Ascending aorta (tissue), 2 donors: ENCODE measurements at regions of chr20 and their contacts with region 1.

Region 1: DNA sequence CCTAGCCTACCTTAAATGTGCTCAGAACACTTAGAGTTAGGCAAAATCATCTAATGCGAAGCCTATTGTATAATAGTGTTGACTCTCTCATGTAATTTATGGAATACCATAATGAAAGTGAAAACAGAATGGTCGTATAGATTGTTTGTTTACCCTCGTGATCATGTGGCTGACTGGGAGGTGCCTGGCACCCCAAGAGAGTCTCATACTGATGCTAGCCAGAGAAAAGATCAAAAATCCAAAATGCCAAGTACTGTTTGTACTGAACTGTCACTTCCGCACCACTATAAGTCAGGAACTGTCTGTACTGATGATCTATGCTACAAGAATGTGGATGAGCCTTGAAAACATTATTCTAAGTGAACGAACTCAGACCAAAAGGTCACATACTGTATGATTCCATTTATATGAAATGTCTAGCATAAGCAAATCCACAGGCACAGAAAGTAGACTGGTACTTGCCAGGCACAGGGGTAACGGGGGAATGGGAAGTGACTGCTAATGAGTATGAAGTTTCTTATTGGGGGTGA is 22.4 kb downstream of the ZMYND8 start:
- DNase-seq: peak in 1 of 2 donors; percentile 75
- H3K4me3 ChIP-seq: peak overlapping the region in 1 of 2 donors; percentile 9
- H3K27ac ChIP-seq: peak overlapping the region; percentile 82 to 84
- H3K4me1 ChIP-seq: peaks cover 7 to 55% of the 10 kb centered on the region in 2 donors
- H3K27me3 ChIP-seq: no peaks in the 10 kb centered on the region
- CTCF ChIP-seq: no peak

Region 2: DNA sequence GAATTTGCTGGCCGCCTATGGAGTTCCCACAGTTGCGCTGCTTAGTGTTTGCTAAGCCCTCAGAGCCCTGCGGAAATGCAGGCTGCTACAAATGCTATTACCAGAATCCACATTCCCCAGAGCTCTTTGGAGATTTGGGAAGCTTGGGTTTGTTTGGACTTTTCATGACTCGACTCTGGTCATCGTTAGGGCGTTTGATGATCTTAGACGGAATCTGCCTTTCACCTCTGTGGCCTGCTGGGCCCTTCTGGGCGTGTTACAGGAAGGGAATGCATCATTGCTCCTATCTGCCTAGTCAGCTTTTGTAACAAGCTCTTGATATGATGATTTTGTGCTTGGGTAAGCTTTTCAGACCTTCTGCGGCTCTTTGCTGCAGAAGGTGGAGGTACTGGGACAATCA is 388.6 kb before region 1 on chr20:
- intact Hi-C with region 1: no loop called
- DNase-seq: no peak
- H3K4me3 ChIP-seq: no peak overlapping the region
- H3K27ac ChIP-seq: peak overlapping the region in 1 of 2 donors; percentile 11
- H3K4me1 ChIP-seq: peaks cover 0 to 6% of the 10 kb centered on the region in 2 donors
- H3K27me3 ChIP-seq: no peaks in the 10 kb centered on the region
- CTCF ChIP-seq: no peak

Region 3: GRCh38 chr20:47133574-47134456 is 200.3 kb before region 1 on chr20:
- intact Hi-C with region 1: no loop called
- DNase-seq: no peak
- H3K4me3 ChIP-seq: no peak overlapping the region
- H3K27ac ChIP-seq: no peak overlapping the region
- H3K4me1 ChIP-seq: no peaks in the 10 kb centered on the region
- H3K27me3 ChIP-seq: no peaks in the 10 kb centered on the region
- CTCF ChIP-seq: no peak

Region 4: GRCh38 chr20:47317127-47317895 is 16.8 kb before region 1 on chr20:
- intact Hi-C with region 1: loop called (anchors 1 kb)
- DNase-seq: peak; percentile 68 to 96
- H3K4me3 ChIP-seq: peak overlapping the region in 1 of 2 donors; percentile 15
- H3K27ac ChIP-seq: peak overlapping the region; percentile 97 to 99
- H3K4me1 ChIP-seq: peaks cover 31 to 52% of the 10 kb centered on the region in 2 donors
- H3K27me3 ChIP-seq: no peaks in the 10 kb centered on the region
- CTCF ChIP-seq: no peak

Region 5: DNA sequence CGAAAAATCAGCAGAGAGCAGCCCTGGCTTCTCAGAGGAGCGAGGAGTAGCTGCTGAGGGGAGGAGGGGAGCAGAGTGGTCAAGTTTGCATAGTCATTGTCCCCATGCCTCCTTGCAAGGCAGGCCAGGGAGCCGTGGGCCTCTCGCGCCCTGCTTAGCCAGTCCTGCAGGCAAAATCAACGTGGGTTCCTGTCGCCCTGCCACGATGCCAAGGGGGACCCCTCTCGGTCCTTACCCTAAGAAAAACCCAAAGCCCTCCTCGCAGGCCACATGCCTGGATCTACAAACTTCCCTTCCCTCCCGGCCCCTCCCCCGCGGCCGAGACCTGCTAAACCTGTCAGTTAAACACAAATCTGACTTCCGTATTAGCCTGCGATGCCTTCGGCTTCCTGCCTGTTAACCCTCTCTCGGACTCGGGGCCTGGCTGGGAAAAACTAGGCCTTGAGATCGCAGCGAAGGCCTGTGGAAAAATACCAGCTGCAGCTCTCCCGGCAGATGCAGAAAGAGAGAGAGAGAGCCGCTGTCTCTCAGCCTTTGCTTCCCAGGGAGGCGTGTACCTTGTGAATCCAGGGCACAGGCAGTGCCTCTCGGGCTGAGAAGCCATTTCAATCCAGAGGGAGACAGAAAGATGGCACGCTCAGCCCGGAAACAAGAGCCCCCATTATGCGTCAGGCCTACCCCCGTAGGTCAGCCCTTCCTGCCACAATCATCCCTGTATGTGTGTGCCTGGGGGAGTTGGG is 23.4 kb after region 1 on chr20:
- intact Hi-C with region 1: loop called (anchors 1 kb)
- DNase-seq: peak; percentile 19 to 89
- H3K4me3 ChIP-seq: peak overlapping the region in 1 of 2 donors; percentile 8
- H3K27ac ChIP-seq: peak overlapping the region; percentile 95 to 99
- H3K4me1 ChIP-seq: peaks cover 51 to 91% of the 10 kb centered on the region in 2 donors
- H3K27me3 ChIP-seq: no peaks in the 10 kb centered on the region
- CTCF ChIP-seq: no peak